ENCODE measurements at regions of chr3 and their contacts with region 1.

Region 1: GRCh38 chr3:14113965-14114635 is 10.6 kb downstream of the CHCHD4 start:
- DNase-seq: peak in 1 of 2 experiments; percentile 41
- H3K4me3 ChIP-seq: no peak overlapping the region
- H3K27ac ChIP-seq: no peak overlapping the region
- H3K4me1 ChIP-seq: no peaks in the 10 kb centered on the region
- H3K27me3 ChIP-seq: no peaks in the 10 kb centered on the region
- CTCF ChIP-seq: peak in 2 of 3 experiments; percentile 31 to 45; a peak in 3 of 4 replicates
- EP300 ChIP-seq: no peak
- POLR2A ChIP-seq: no peak
- RAD21 ChIP-seq: peak; percentile 58 to 75

Region 2: GRCh38 chr3:13901935-13902584 is 212.0 kb before region 1 on chr3:
- CTCF ChIA-PET with region 1: interaction called, 123 read pairs
- POLR2A ChIA-PET with region 1: no interaction called
- DNase-seq: no peak
- H3K4me3 ChIP-seq: no peak overlapping the region
- H3K27ac ChIP-seq: no peak overlapping the region
- H3K4me1 ChIP-seq: no peaks in the 10 kb centered on the region
- H3K27me3 ChIP-seq: no peaks in the 10 kb centered on the region
- CTCF ChIP-seq: no peak
- EP300 ChIP-seq: no peak
- POLR2A ChIP-seq: no peak
- RAD21 ChIP-seq: no peak

Measured in H1 (cell line).